Transverse colon (tissue), 4 donors: ENCODE measurements at regions of chr6 and their contacts with region 1.

Region 1: DNA sequence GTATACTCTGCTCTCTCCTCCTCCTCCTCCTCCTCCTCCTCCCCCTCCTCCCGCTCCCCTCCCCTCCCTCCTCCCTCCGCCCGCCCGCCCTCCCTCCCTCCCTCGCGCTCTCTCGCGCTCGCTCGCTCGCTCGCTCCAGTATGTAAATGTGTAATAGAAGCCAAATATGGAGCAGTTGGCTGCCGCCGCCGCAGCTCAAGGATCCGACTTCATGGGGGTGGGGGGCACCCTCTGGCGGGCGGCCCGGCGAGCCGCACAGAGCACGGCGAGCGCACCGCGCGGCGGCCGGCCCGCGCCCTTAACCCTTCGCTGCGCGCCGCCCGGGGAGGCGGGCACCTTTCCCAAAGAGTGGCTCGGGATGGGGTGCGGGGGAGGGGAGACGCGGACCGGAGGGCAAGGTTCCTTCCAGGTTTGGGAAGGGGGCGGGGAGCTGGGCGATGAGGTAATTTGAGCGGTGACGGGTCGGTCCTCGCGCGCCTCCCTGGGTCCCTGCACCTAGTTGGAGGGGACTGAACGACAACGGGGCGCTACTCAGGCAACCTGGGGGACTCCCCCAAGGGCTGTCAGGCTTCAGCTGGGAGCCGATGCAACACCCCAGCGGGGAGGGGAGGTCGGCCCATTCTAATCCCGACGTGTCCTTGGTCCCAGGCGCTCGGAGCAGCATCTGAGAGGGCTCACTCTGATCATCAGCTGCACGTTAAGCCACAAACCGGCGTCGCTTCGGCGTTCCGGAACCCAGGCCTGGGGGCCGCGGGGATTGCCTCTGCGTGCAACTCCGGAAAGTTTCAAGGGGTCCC is 409 bp upstream of the ATXN1 start:
- DNase-seq: peak; percentile 91
- H3K4me3 ChIP-seq: peak overlapping the region; percentile 60 to 95 (median 89)
- H3K27ac ChIP-seq: peak overlapping the region; percentile 99 to 100 (median 100)
- H3K4me1 ChIP-seq: peaks cover 0 to 59% (median 24%) of the 10 kb centered on the region in 4 donors
- H3K27me3 ChIP-seq: no peaks in the 10 kb centered on the region
- CTCF ChIP-seq: peak in 2 of 5 experiments; percentile 9 to 28
- EP300 ChIP-seq: no peak
- POLR2A ChIP-seq: peak; percentile 52

Region 2: DNA sequence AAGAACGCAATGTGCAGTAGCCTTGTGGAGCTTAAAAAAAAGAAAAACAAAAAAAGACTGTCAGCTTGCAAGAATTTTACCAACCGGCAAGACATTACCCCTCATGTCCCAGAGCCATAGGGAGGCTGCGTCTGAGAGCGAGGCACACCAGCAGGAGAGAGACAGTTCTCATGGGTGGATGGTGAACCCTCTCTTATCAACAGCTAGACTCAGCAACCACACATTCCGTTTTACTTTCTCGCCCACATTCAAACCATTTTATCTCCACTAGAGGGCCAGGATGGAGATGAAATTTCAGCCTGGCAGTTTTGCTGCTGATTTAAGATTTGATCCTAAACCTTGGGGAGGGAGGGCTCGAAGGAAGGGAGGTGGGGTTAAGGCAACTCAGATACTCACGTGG is 247.4 kb before region 1 on chr6:
- in situ Hi-C with region 1: loop called in 3 of 4 experiments (anchors 10 kb)
- intact Hi-C with region 1: loop called (anchors 10 kb)
- DNase-seq: no peak
- H3K4me3 ChIP-seq: no peak overlapping the region
- H3K27ac ChIP-seq: peak overlapping the region in 3 of 4 donors; percentile 15 to 49 (median 43)
- H3K4me1 ChIP-seq: peaks cover 8 to 35% (median 16%) of the 10 kb centered on the region in 4 donors
- H3K27me3 ChIP-seq: no peaks in the 10 kb centered on the region
- CTCF ChIP-seq: peak; percentile 34 to 49 (median 39)
- EP300 ChIP-seq: no peak
- POLR2A ChIP-seq: no peak